Tibial artery (tissue), 4 donors: ENCODE measurements at regions of chr17 and their contacts with region 1.

Region 1: DNA sequence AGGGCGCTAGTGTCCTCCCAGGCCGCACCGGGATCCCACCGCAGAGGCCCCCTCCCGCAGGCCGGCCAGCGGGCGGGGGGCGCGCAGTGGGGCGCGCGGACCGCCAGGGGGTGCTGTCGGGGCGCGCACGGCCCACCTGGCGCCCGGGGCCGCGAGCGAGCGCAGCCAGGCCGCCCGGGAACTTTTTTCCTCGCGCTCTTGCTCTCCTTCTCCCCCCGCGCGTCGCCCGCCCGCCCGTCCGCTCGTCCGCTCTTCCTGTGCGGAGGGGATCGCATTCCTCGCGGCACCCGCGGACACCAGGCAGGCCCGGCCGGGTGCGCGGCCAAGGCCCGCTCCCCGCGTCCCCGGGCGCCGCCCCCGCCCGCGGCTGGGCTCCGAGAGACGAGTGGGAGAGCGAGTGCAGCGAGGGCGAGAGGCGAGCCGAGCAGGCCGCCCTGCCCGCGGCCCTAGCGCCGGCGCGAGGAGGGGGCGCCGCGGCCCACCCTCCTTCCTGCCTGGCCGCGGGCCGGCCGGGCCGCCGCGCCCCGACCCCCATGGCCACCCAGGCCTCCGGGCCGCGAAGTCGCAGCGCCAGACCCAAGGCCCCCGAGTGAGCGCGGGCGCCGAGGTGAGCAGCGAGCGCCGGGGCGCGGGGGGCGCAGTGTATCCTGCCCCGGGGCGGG is at the start of gene RAI1:
- DNase-seq: peak; percentile 59 to 85
- H3K4me3 ChIP-seq: peak within 1 kb of the TSS; percentile 67 to 79
- H3K27ac ChIP-seq: peak within 1 kb of the TSS; percentile 82 to 95
- H3K4me1 ChIP-seq: peaks cover 5 to 36% (median 25%) of the 10 kb centered on the region in 4 donors
- H3K27me3 ChIP-seq: no peaks in the 10 kb centered on the region
- CTCF ChIP-seq: peak; percentile 61 to 99

Region 2: DNA sequence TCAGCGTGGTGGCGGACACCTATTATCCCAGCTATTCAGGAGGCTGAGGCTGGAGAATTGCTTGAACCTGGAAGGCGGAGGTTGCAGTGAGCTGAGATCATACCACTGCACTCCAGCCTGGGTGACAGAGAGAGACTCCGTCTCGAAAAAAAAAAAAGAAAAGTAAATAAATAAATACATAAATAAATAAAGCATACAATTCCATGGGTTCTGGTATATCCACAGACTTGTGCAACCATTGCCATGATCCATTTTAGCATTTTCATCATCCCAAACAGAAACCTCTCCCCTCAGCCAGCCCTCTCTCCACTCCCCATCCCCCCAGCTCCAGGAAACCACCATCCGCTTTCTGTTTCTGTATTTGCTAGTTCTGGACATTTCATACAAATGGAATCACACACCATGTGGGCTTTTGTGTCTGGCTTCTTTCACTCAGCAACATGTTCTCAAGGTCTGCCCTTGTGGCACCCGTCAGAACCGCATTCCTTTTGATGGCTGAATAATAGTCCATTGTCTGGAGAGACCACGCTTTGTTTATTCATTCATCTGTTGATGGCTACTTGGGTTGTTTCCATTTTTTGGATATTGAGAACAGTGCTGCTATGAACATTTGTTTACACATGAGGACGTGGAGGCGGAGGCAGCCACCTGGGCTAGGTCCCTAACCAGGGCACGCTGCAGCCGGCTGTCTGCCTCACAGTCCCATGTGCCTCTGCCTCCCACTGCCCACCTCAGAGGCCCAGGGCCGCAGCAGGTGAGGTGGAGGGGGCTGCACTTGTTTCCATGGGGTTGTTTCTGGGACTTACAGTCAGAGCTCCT is 301.9 kb before region 1 on chr17:
- intact Hi-C with region 1: no loop called
- DNase-seq: no peak
- H3K4me3 ChIP-seq: no peak overlapping the region
- H3K27ac ChIP-seq: no peak overlapping the region
- H3K4me1 ChIP-seq: no peaks in the 10 kb centered on the region
- H3K27me3 ChIP-seq: peaks cover 0 to 35% of the 10 kb centered on the region in 2 donors
- CTCF ChIP-seq: no peak

Region 3: DNA sequence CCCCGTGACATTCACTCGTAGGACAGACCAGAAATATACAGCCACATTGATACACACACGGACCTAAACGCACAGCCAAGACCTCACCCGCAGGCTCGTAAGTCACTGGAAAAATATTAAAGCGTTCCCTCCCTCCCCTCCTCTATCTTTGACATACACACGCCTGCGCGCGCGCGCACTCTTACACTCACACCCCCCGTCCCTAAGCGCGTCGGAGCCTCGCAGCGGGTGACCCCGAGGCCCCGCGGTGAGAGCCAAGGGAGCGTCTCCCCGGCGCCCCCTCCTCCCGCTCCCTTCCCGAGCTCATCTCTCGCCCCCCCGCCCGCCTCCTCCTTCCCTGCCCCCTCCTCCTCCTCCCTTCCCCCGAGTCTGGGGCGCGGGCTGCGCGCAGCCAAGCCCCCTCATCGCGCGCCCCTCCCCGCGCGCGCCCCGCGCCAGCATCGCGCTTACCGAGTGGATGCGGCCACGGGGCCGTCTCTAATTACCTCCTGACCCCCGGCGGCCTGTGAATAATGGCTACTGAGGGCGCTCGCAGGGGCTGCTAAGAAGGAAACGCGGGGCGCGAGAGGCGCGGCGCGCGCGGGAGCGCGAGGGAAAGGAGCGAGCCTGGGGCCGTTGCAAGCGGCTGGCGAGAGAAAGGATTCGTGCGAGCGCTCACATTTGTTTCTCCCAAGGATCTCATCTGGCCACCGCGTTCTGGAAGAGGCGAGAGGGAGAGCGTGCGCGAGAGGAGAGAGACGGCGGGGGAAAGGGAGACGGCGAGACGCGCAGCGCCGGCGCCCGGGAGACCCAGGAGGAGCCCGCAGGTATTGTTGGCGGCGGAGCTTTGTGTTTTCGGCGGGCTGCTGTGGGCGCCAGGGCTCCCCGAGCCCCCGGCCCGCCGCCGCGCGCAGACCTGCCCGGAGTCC is 42.3 kb after region 1 on chr17:
- intact Hi-C with region 1: loop called (anchors 5 kb)
- DNase-seq: no peak
- H3K4me3 ChIP-seq: peak overlapping the region; percentile 56 to 68
- H3K27ac ChIP-seq: peak overlapping the region in 1 of 2 donors; percentile 43
- H3K4me1 ChIP-seq: peaks cover 0 to 38% (median 27%) of the 10 kb centered on the region in 4 donors
- H3K27me3 ChIP-seq: no peaks in the 10 kb centered on the region
- CTCF ChIP-seq: no peak

Region 4: GRCh38 chr17:17783116-17783824 is 102.0 kb after region 1 on chr17:
- intact Hi-C with region 1: loop called (anchors 10 kb)
- DNase-seq: peak in 1 of 2 donors; percentile 79
- H3K4me3 ChIP-seq: peak overlapping the region; percentile 50 to 58
- H3K27ac ChIP-seq: peak overlapping the region; percentile 70 to 82
- H3K4me1 ChIP-seq: peaks cover 13 to 62% (median 47%) of the 10 kb centered on the region in 4 donors
- H3K27me3 ChIP-seq: no peaks in the 10 kb centered on the region
- CTCF ChIP-seq: no peak

Region 5: DNA sequence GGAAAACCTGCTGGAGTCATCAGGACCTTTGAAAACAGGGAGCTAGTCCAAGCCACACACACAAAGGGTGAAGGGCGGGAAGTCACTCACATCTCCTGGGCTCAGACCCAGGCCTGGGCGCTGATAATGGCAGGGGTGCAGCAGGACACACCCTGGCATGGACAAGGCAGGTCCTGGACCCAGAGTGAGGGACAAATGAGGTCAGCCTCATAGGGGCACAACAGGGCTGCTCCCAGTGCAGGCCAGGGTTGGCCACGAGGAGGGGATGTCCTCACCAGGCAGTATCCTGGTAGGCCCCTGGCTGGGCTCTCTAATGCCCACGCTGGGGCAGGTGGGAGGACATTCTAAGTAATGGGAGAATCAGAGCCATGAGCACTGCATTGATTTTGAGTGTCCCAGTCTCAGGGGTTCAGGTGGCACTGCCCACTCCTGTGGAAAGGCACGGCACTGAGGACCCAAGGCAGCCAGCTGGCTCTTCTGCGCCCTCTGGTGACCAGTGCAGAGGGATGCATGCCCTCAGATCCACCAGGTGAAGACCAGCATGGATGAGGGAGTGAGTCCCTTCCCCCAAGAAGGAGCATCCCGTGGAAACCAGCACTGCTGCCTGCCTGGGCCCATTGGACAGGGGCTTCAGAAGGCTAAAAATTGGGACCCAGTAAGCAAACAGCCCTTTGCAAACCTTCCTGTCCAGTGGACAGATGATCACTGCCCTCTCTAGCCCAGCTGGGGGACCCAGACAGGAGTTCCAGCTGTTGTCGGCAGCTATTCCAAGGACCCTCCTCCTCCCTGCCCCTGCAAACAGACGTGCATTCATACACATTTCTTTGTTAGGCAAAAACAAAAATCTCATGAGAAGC is 178.8 kb after region 1 on chr17:
- intact Hi-C with region 1: loop called (anchors 2 kb)
- DNase-seq: peak; percentile 45 to 83
- H3K4me3 ChIP-seq: no peak overlapping the region
- H3K27ac ChIP-seq: no peak overlapping the region
- H3K4me1 ChIP-seq: peaks cover 0 to 27% (median 25%) of the 10 kb centered on the region in 4 donors
- H3K27me3 ChIP-seq: no peaks in the 10 kb centered on the region
- CTCF ChIP-seq: peak; percentile 98 to 99

Region 6: DNA sequence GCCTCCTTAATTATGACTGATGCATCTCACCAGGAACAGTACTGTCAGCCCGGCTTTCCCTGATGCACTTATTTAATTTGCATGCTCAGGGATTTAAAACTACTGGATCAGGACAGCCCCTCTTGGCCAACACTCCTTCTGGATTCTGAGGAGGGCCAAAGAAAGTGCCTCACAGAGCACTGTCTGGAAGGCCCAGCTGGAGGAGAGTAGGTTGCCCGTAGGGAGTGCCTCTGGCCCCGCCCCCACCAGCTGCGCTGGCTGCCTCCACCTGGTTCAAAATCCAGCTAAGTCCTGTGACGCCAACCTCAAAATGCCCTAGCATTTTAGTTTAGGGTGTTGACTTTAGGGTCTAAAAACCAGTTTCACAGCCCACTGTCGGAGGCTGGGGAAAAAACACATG is 204.9 kb after region 1 on chr17:
- intact Hi-C with region 1: no loop called
- DNase-seq: no peak
- H3K4me3 ChIP-seq: no peak overlapping the region
- H3K27ac ChIP-seq: no peak overlapping the region
- H3K4me1 ChIP-seq: peaks cover 0 to 8% (median 4%) of the 10 kb centered on the region in 4 donors
- H3K27me3 ChIP-seq: no peaks in the 10 kb centered on the region
- CTCF ChIP-seq: no peak

Region 7: DNA sequence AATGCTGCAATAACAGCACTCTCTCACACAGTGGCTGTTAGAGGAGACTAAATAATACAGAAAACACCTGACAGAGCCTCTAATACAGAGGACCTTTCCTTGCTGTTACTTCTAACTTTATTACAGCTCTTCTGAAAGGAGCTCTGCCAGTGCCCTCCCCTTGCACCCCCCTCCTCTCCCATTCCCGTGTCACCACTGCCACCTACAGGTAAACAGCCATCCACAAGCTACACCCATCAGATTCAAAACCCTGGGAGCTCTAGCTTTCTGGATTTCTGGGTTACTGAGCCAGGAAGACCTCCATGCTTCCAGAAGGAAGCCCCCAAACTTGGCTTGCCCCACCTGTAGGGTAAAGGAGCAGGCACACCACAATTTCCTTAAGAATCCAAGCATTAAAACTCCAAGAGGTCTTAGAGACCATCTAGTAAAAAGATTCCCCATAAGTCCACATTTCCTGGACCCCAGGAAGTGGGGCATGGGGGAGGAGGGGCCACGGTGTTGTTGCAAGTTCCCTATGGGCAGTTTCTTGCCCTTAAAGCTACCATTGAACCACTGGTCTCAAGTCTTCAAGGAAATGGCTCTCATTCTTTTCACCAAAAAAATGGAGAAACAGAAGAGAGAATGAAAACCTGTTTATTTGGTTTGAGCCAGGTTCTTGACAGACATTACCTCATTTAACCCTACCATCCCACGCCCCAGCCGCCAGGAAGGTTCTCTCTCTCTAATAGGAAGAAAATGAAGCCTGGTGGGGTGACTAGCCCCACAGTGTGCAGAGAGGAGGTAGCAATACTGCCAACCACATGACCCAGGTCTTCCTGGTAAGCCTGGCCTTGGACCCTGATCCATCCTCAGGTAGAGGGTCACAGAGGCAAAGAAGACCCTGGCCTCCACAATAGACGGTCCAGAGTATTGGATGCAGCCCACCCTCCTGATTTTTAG is 238.1 kb after region 1 on chr17:
- intact Hi-C with region 1: loop called (anchors 2 kb)
- DNase-seq: peak; percentile 69 to 82
- H3K4me3 ChIP-seq: no peak overlapping the region
- H3K27ac ChIP-seq: no peak overlapping the region
- H3K4me1 ChIP-seq: peaks cover 0 to 41% (median 29%) of the 10 kb centered on the region in 4 donors
- H3K27me3 ChIP-seq: no peaks in the 10 kb centered on the region
- CTCF ChIP-seq: peak; percentile 74 to 76

Region 8: GRCh38 chr17:18038861-18039534 is 357.7 kb after region 1 on chr17 and contains the starts of genes ATPAF2 and GID4:
- intact Hi-C with region 1: loop called (anchors 5 kb)
- DNase-seq: peak; percentile 100
- H3K4me3 ChIP-seq: peak within 1 kb of the TSS; percentile 85 to 97
- H3K27ac ChIP-seq: peak within 1 kb of the TSS; percentile 73 to 92
- H3K4me1 ChIP-seq: peaks cover 0 to 41% (median 31%) of the 10 kb centered on the region in 4 donors
- H3K27me3 ChIP-seq: no peaks in the 10 kb centered on the region
- CTCF ChIP-seq: no peak